Activated CD4-positive, alpha-beta memory T cell treated with anti-CD3 and anti-CD28 coated beads for 36 hours (primary cell): ENCODE measurements at regions of chr3 and their contacts with region 1.

Region 1: DNA sequence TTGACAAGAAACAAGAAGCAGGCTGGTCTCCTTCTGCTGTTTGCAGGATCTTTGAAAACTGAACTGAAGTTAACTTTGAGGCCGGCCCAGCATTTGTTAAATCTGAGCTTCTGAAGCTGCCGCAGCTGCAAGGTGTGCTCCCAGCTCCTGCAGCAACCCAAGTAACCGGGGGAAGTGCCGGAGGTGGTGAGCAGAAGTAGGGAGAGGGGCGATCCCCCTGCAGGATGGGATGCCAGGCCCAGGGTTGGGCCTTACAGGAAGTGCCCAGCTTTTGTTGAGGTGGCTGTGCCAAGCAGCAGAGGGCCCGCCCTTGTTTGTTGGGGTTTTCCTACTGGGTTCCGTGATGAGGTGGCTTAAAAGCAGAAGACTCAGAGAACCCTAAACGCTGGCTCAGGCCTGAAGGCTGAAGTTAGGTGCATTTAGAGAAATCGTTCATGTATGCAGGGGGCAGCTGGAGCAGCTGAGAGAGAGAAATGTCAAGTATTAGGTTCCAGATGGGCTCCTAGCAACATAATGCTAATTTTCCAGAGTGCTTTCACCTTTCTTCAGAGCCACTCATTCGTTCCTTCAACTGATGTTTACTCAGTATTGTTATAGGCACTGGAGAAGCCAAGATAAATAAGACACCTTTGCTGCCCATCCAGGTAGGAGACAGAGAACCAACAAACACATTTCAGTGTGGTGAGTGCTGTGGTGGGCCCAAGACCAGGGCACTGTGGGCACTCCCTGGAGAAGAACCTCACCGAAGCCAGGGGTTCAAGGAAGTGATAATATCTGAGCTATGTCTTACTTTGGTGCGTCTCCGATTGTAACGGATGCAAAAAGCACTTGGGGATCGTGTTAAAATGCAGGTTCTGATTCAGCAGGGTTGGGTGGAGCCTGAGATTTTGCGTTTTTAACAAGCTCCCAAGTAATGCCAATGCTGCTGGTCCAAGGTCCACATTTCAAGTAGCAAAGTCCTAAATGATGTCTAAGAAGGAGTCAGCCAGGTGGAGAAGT is 42.2 kb upstream of the PLCL2 start:
- DNase-seq: peak; percentile 89
- H3K4me3 Mint-ChIP-seq: peak overlapping the region; percentile 67
- H3K27ac Mint-ChIP-seq: peak overlapping the region; percentile 91
- H3K4me1 Mint-ChIP-seq: peaks cover 80% of the 10 kb centered on the region
- H3K27me3 Mint-ChIP-seq: no peaks in the 10 kb centered on the region

Region 2: DNA sequence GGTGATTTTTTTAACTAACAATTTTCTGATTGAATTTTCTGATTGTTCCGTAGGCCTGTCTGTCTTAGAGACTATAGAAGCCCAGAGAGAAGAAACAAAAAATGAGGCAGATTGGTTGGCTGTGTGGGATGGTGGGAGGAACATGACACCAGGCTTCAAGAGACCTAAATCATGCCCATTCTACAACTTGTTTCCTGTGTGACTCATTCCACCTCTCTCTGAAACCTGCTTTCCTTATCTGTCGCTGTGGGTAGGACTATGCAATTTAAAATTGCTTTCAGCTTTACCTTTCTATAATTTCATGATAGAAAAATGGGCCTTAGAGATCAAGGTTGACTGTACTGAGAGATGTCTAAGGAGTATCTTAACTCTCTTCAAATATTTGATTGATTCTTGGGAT is 533.0 kb before region 1 on chr3:
- CTCF ChIA-PET with region 1: no interaction called
- POLR2A ChIA-PET with region 1: no interaction called
- intact Hi-C with region 1: loop called (anchors 5 kb)
- DNase-seq: peak; percentile 76
- H3K4me3 Mint-ChIP-seq: peak overlapping the region; percentile 33
- H3K27ac Mint-ChIP-seq: peak overlapping the region; percentile 84
- H3K4me1 Mint-ChIP-seq: peaks cover 91% of the 10 kb centered on the region
- H3K27me3 Mint-ChIP-seq: no peaks in the 10 kb centered on the region

Region 3: DNA sequence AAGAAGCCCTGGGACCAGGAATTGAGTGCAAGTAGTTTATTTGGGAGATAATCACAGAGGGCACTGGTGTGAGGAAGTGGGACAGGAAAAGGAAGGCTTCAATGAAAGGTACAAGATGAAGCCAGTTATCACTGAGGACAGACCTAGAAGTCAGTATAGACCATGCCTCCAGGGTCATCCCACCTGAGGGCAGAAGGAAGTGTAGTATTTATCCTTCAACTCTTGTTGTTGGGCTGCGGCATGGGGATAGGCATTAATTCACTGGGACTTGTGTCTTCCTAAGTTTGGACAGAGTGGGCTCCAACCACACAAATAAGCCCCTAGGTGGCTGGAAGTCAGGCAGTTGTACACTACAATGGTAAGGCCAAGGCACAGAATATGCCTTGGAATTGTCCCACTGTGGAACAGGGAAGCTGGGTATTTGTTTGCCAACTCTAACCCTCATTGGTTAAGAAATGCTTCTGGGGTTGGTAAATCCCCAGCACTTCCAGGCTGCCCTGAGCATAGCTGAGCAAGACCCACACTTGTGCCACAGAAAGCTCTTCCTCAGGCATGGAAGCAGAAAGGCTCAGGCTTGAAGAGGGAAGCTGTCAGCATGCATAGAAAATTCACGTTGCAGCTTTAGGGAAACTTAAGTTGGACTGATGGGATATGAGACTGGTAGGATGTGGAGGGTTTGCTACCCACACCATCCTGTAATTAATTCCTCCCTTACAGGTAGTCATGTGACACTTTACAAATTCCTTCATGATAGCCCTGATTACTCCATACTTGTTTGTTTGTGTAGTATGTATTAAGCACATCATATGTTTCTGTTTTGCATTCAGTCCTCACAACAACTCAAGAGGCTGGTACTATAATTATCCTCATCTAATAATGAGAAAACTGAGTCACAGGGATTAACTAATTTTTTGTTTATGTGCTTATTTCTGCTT is 44.8 kb before region 1 on chr3:
- CTCF ChIA-PET with region 1: no interaction called
- POLR2A ChIA-PET with region 1: no interaction called
- intact Hi-C with region 1: loop called (anchors 2 kb)
- DNase-seq: no peak
- H3K4me3 Mint-ChIP-seq: no peak overlapping the region
- H3K27ac Mint-ChIP-seq: peak overlapping the region; percentile 64
- H3K4me1 Mint-ChIP-seq: peaks cover 30% of the 10 kb centered on the region
- H3K27me3 Mint-ChIP-seq: peaks cover 1% of the 10 kb centered on the region

Region 4: DNA sequence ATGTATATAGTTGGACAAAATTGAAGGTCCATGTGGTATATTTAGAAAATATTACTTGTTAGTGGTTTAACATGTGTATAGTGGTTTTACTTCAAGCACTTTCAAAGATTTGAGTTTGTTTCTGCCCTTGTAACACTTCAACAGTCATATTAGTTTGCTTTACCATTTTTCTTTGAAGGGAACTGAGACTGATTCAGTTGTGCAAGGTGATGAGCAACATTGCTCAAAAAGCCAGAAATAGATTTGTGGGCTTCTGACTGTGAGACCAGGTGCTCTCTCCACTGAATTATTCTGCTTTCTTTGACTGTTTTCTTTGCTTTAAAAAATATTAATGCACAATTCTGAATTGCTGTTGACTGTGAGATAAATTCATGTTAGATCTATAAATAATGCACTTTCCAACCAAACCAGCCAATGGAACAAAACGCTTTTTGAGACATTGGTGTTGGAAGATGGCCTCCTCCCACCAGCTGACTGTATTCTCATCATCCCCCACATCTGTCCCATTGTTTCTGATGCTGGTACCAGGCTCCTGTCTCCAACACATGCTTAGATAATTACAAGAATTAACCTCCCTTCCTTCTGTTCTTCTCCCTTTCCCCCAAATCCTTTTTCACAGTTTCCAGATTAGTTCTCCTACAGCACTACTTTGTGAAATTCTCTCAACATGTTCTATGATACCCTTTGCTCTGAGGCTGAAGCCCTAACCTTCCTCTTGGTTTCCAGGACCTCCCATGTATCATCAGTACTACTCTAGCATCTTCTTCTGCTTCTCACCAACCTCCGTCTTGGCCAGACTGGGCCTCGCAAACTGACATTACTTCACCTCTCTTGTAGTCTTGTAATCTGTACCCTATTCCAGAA is 70.1 kb after region 1 on chr3:
- CTCF ChIA-PET with region 1: no interaction called
- POLR2A ChIA-PET with region 1: no interaction called
- intact Hi-C with region 1: loop called (anchors 2 kb)
- DNase-seq: no peak
- H3K4me3 Mint-ChIP-seq: no peak overlapping the region
- H3K27ac Mint-ChIP-seq: peak overlapping the region; percentile 71
- H3K4me1 Mint-ChIP-seq: peaks cover 70% of the 10 kb centered on the region
- H3K27me3 Mint-ChIP-seq: no peaks in the 10 kb centered on the region

Region 5: DNA sequence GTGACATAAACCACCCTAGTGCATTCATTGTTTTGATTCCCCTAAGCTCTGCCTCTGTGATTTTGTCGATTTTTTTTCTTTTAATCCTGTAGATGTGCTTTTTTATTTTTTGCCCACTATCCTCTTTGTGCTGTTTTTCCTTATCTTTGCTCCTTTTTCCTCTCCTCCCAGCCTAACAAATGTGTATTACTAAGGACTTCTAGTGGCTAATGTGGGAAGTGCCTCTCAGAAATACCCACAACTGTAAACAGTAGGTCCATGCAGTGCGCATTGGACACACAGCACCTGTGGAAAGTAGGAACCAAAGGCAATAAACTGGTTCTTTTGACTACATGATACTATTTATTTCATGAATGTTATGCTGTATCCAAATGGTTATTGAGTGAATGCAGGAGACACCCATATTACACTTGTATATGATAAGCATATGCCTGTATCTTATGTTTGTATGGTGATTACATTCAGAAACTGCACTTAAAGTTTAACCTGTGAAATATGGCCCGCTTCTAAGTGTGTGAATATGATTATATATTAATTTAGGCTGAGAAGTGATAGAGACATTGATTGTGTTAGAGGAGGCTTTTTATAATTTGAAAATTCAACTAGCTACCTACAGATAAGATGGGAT is 189.9 kb after region 1 on chr3:
- CTCF ChIA-PET with region 1: no interaction called
- POLR2A ChIA-PET with region 1: no interaction called
- intact Hi-C with region 1: loop called (anchors 5 kb)
- DNase-seq: no peak
- H3K4me3 Mint-ChIP-seq: no peak overlapping the region
- H3K27ac Mint-ChIP-seq: no peak overlapping the region
- H3K4me1 Mint-ChIP-seq: peaks cover 72% of the 10 kb centered on the region
- H3K27me3 Mint-ChIP-seq: no peaks in the 10 kb centered on the region